Vagina (tissue), 2 donors: ENCODE measurements at regions of chr10 and their contacts with region 1.

Region 1: DNA sequence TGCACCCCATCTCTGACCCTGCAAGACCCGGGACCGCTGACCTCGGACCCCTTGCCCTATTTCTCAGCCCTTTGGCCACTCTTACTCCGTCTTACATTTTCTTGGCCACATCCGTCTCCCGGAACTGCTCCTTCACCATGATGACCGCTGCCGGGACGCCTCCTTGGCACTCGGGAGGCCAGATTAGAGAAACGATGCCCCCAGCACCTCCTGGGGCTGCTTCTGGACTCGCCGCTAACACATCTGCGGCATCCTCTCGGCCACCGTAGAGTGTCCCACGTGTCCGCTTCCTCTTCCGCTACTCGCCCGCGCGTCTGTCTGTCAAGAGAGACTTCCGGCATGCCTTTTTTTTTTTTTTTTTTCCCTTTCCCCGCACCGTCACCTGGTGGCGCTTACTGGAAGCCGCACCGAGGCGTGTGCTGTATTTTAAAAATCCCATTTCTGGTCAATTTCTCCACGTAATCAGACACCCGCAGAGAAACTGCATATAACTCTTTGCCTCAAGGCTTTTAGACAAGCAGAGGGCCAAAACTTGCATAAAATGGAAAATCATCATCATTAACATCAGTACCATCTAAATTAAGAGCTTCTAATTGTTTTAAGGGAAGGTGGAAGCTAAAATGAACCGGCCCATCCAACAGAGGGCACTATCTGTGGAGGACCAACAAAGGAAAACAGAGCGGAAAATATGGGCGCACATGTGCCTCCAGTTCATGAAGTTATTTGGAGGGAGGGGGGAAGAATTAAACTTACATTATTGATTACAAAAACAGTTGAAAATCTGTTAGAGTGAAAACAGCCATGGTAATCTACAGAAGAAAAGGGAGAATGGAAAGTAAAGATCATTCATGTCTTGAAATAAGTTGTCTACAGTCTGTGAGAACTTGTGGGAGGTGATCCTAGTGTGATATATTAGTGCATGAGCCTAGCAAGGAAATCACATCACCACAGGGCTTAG is at the start of gene POLR3A:
- DNase-seq: peak in 1 of 2 donors; percentile 94
- H3K4me3 ChIP-seq: peak within 1 kb of the TSS; percentile 90 to 91
- H3K27ac ChIP-seq: peak within 1 kb of the TSS; percentile 73
- H3K4me1 ChIP-seq: peaks cover 30% of the 10 kb centered on the region
- H3K27me3 ChIP-seq: no peaks in the 10 kb centered on the region
- CTCF ChIP-seq: peak; percentile 49 to 79 (median 59)
- POLR2A ChIP-seq: no peak
- total RNA-seq, gene POLR3A: 16.9 TPM

Region 2: GRCh38 chr10:77857254-77857653 is 172.3 kb before region 1 on chr10:
- intact Hi-C with region 1: loop called (anchors 10 kb)
- DNase-seq: no peak
- H3K4me3 ChIP-seq: no peak overlapping the region
- H3K27ac ChIP-seq: no peak overlapping the region
- H3K4me1 ChIP-seq: peaks cover 42% of the 10 kb centered on the region
- H3K27me3 ChIP-seq: no peaks in the 10 kb centered on the region
- CTCF ChIP-seq: no peak
- POLR2A ChIP-seq: no peak